Activated T-helper 1 cell treated with anti-CD3 and anti-CD28 coated beads, Interleukin-12 subunit alpha, Interleukin-12 subunit beta, Interleukin-2, Interleukin-4 antibody, amounts not matched to agents 30 ng/mL and 10 ng/mL and 1 ng/mL, durations not matched to agents 14 hours and 24 hours and 36 hours (primary cell): ENCODE measurements at regions of chr10 and their contacts with region 1.

Region 1: DNA sequence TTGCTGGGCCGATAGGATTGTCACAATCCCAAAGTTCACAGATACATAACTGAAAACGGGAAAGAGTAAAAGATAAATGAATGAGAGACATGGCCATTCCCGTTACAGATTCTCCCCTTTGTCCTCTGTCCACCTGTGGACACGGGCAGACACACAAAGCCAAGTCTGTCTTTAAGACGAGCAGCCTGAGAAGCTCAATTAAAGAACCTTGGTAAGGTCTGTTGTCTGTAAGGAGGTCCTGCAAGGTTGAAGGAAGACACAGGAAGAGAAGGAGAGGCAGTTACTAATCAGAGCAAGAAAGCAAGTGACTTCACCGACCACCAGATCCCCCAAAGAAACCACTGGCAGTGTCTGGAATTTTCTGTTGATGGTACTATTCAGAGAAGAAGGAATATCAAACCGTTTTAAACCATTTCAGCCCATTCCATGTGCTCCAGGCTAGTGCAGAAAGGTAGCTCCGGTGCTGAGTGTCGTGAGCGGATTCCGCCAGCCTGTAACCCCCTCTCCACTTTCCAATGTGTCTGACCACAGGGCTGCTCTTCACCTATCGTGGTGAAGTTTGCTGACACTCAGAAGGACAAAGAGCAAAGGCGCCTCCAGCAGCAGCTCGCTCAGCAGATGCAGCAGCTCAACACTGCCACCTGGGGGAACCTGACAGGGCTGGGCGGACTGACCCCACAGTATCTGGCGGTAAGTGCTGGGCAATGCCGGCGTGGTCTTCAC is 252.6 kb downstream of the CELF2 start:
- DNase-seq: peak; percentile 26
- H3K4me3 Mint-ChIP-seq: no peak overlapping the region
- H3K27ac Mint-ChIP-seq: peak overlapping the region; percentile 68
- H3K4me1 Mint-ChIP-seq: peaks cover 69% of the 10 kb centered on the region
- H3K27me3 Mint-ChIP-seq: no peaks in the 10 kb centered on the region

Region 2: GRCh38 chr10:11017570-11018431 is 252.5 kb before region 1 on chr10 and contains the start of gene CELF2:
- intact Hi-C with region 1: loop called (anchors 5 kb)
- DNase-seq: peak; percentile 37
- H3K4me3 Mint-ChIP-seq: peak within 1 kb of the TSS; percentile 71
- H3K27ac Mint-ChIP-seq: peak within 1 kb of the TSS; percentile 6
- H3K4me1 Mint-ChIP-seq: peaks cover 20% of the 10 kb centered on the region
- H3K27me3 Mint-ChIP-seq: peaks cover 83% of the 10 kb centered on the region
- total RNA-seq, gene CELF2: 110 and 111 TPM in 2 replicates

Region 3: GRCh38 chr10:11113156-11113555 is 157.1 kb before region 1 on chr10:
- intact Hi-C with region 1: loop called (anchors 1 kb)
- DNase-seq: no peak
- H3K4me3 Mint-ChIP-seq: no peak overlapping the region
- H3K27ac Mint-ChIP-seq: no peak overlapping the region
- H3K4me1 Mint-ChIP-seq: peaks cover 12% of the 10 kb centered on the region
- H3K27me3 Mint-ChIP-seq: peaks cover 4% of the 10 kb centered on the region

Region 4: DNA sequence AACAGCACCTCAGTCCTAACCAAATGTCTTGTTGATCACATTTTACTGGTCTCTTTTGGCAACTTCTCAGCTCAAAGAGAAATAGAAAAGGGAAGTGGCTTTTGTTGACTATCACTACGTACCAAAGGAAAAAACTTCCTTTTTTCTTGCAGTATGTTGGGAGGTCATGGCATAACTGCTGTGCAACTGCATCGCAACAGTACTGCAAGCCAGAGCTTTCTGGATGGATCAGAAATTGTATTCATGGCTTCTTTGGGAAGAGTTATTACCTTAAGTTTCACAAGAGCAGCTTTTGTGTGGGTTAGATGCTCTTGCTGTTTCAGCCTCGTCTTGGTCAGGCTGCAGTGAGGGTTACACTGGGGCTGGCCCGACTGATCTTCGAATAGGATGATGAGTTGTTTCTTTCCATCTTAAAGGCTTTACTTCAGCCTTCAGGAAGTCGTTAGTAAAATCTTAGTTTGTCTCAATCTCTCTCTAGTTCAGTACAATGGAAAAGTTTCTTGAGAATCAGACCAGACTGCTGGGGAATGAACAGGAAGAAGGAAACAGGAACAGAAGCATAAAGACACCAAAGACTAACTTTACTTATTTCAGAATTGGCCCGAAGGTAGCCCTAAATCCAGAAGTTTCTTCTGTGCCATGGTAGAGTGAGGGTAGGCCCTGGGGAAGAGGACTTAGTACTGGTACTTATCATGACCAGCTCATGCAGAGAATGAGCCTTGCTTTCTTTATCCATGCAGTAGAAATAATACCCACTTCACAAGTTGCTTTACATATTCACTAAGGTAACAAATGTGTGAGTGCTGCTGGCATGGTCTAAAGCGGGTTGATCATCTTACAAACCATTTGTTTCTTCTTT is 99.1 kb before region 1 on chr10:
- intact Hi-C with region 1: loop called (anchors 2 kb)
- DNase-seq: no peak
- H3K4me3 Mint-ChIP-seq: no peak overlapping the region
- H3K27ac Mint-ChIP-seq: no peak overlapping the region
- H3K4me1 Mint-ChIP-seq: no peaks in the 10 kb centered on the region
- H3K27me3 Mint-ChIP-seq: no peaks in the 10 kb centered on the region

Region 5: DNA sequence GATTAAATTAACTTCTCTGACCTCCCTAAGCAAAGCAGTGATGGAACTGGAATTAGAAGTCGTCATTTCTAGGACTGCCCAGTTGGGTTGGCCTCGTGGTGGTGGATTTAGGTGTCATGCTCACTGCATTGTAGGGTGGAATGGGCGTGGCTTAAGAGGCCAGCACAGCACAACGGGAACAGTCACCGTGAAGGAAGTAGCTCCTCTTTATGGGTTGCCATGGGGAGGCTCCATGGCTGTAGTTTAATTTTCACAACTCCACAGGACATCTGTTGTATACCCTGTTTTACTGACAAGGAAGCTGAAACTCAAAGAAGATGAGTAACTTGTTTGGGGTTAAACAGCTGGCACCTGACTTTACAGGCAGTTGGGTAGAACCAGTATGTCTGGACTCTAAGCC is 44.4 kb before region 1 on chr10:
- intact Hi-C with region 1: no loop called
- DNase-seq: peak; percentile 48
- H3K4me3 Mint-ChIP-seq: peak overlapping the region; percentile 47
- H3K27ac Mint-ChIP-seq: peak overlapping the region; percentile 91
- H3K4me1 Mint-ChIP-seq: peaks cover 94% of the 10 kb centered on the region
- H3K27me3 Mint-ChIP-seq: no peaks in the 10 kb centered on the region